Activated CD4-positive, alpha-beta T cell treated with anti-CD3 and anti-CD28 coated beads for 36 hours (primary cell): ENCODE measurements at regions of chr2 and their contacts with region 1.

Region 1: GRCh38 chr2:54704688-54705605 is 18.5 kb upstream of the EML6 start:
- DNase-seq: no peak
- ATAC-seq: peak; percentile 69
- H3K4me3 Mint-ChIP-seq: no peak overlapping the region
- H3K27ac Mint-ChIP-seq: no peak overlapping the region
- H3K4me1 Mint-ChIP-seq: peaks cover 9% of the 10 kb centered on the region
- H3K27me3 Mint-ChIP-seq: peaks cover 25% of the 10 kb centered on the region

Region 2: DNA sequence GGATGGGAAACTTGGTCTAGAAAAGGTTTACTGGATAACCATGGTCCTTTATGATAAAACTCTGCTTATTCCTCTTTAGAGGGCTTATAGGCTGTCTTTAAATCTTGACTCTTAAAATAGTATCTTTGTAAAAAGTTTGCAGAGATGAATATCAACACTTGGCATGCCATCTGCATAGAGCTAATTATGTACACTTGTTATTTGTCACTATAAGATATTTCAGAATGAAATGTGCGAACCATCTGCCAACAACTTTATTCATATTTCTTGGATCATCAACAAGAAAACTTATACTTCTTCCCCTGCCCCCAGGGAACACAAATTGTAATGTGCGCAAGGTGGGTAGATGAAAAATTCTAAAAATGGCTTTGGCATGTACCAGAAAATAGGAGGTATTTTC is 1590.4 kb before region 1 on chr2:
- CTCF ChIA-PET with region 1: no interaction called
- POLR2A ChIA-PET with region 1: no interaction called
- intact Hi-C with region 1: no loop called
- DNase-seq: no peak
- ATAC-seq: no peak
- H3K4me3 Mint-ChIP-seq: no peak overlapping the region
- H3K27ac Mint-ChIP-seq: no peak overlapping the region
- H3K4me1 Mint-ChIP-seq: no peaks in the 10 kb centered on the region
- H3K27me3 Mint-ChIP-seq: no peaks in the 10 kb centered on the region

Region 3: GRCh38 chr2:54115284-54116137 is 589.4 kb before region 1 on chr2 and contains the start of gene ACYP2:
- CTCF ChIA-PET with region 1: interaction called, 6 read pairs
- POLR2A ChIA-PET with region 1: no interaction called
- intact Hi-C with region 1: loop called in 1 of 2 experiments (anchors 10 kb)
- DNase-seq: peak; percentile 95
- ATAC-seq: peak; percentile 90
- H3K4me3 Mint-ChIP-seq: peak within 1 kb of the TSS; percentile 85
- H3K27ac Mint-ChIP-seq: peak within 1 kb of the TSS; percentile 96
- H3K4me1 Mint-ChIP-seq: peaks cover 12% of the 10 kb centered on the region
- H3K27me3 Mint-ChIP-seq: peaks cover 2% of the 10 kb centered on the region
- total RNA-seq, gene ACYP2: 6.0 to 6.9 TPM

Region 4: DNA sequence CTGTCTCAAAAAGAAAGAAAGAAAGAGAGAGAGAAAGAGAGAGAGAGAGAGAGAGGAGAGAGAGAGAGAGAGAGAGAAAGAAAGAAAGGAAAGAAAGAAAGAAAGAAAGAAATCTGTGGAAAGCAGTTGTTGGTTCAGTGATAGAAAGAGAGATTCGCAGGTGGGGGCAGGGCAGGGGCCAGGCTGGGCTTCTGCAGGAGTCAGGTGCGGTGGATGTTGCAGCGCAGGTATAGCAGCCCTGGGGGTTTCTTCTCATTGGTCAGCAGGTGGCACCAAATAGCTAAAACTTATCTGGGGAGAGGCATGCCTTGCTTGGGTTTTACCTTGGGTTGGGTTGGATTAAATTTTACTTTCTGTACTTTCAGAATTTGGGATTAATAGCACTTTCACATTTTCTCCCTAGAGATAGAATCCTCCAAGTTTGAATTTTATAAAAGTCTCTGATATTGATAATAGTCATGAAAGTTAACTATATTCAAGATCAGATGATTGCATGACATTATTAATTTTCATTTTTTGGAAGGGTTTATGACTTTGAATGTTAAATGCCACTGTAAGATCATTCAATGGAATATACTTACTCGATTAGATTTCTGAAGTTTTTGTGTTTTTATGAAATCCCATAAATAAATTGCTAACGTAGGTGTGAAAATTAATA is 182.2 kb before region 1 on chr2:
- CTCF ChIA-PET with region 1: interaction called, 74 read pairs
- POLR2A ChIA-PET with region 1: no interaction called
- intact Hi-C with region 1: loop called (anchors 1 kb)
- DNase-seq: peak; percentile 76
- ATAC-seq: peak; percentile 86
- H3K4me3 Mint-ChIP-seq: no peak overlapping the region
- H3K27ac Mint-ChIP-seq: no peak overlapping the region
- H3K4me1 Mint-ChIP-seq: peaks cover 15% of the 10 kb centered on the region
- H3K27me3 Mint-ChIP-seq: peaks cover 2% of the 10 kb centered on the region

Region 5: GRCh38 chr2:54665436-54665856 is 39.5 kb before region 1 on chr2:
- CTCF ChIA-PET with region 1: interaction called, 222 read pairs
- POLR2A ChIA-PET with region 1: no interaction called
- intact Hi-C with region 1: loop called (anchors 1 kb)
- DNase-seq: peak; percentile 75
- ATAC-seq: peak; percentile 92
- H3K4me3 Mint-ChIP-seq: no peak overlapping the region
- H3K27ac Mint-ChIP-seq: peak overlapping the region; percentile 80
- H3K4me1 Mint-ChIP-seq: peaks cover 3% of the 10 kb centered on the region
- H3K27me3 Mint-ChIP-seq: no peaks in the 10 kb centered on the region

Region 6: GRCh38 chr2:54691445-54692135 is 13.4 kb before region 1 on chr2:
- CTCF ChIA-PET with region 1: interaction called, 16 read pairs
- POLR2A ChIA-PET with region 1: no interaction called
- intact Hi-C with region 1: no loop called
- DNase-seq: no peak
- ATAC-seq: no peak
- H3K4me3 Mint-ChIP-seq: no peak overlapping the region
- H3K27ac Mint-ChIP-seq: no peak overlapping the region
- H3K4me1 Mint-ChIP-seq: peaks cover 8% of the 10 kb centered on the region
- H3K27me3 Mint-ChIP-seq: peaks cover 27% of the 10 kb centered on the region